PC-9 (cell line): ENCODE measurements at regions of chr3 and their contacts with region 1.

Region 1: GRCh38 chr3:106183762-106184391 is 315.1 kb upstream of the CBLB start:
- DNase-seq: peak; percentile 32 to 97
- H3K4me3 ChIP-seq: no peak overlapping the region
- H3K27ac ChIP-seq: peak overlapping the region; percentile 31
- H3K4me1 ChIP-seq: peaks cover 18% of the 10 kb centered on the region
- H3K27me3 ChIP-seq: no peaks in the 10 kb centered on the region
- CTCF ChIP-seq: no peak

Region 2: DNA sequence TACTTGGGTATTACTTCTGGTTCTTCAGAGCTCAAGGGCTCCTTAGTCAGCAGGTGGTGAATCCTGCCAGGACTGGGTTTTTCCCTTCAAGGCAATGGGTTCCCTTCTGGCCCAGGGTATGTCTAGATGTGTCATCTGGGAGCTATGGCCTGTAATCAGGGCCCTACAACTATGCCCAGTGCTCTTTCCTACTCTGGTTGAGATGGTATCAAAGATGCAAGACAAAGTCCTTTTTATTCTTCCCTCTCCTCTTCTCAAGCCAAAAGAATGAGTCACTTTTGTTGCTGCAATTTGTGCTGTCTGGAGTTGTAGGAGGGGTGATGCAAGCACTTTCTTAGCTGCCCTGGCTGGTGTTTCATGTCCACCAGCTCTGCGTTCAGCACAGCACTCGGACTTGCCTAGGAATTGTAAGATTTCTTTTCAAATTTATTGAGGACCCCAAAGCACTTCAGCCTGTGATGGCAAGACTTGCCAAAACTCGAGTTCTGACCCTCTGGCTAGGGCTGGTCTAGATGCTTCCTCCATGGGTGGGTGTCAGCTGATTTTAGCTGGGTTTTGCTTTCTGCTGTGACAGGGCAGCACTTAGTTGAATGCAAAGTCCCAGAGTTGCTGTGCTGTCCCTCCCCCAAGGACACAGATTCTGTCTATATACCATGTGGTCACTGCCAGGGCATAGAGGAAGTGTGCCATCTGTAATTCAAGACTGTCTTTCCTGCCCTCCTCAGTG is 185.9 kb before region 1 on chr3:
- CTCF ChIA-PET with region 1: no interaction called
- POLR2A ChIA-PET with region 1: no interaction called
- intact Hi-C with region 1: loop called (anchors 10 kb)
- DNase-seq: peak; percentile 61 to 95
- H3K4me3 ChIP-seq: peak overlapping the region; percentile 34; the same call in 1 of the 2 replicates
- H3K27ac ChIP-seq: peak overlapping the region; percentile 79
- H3K4me1 ChIP-seq: peaks cover 23% of the 10 kb centered on the region
- H3K27me3 ChIP-seq: no peaks in the 10 kb centered on the region
- CTCF ChIP-seq: no peak

Region 3: DNA sequence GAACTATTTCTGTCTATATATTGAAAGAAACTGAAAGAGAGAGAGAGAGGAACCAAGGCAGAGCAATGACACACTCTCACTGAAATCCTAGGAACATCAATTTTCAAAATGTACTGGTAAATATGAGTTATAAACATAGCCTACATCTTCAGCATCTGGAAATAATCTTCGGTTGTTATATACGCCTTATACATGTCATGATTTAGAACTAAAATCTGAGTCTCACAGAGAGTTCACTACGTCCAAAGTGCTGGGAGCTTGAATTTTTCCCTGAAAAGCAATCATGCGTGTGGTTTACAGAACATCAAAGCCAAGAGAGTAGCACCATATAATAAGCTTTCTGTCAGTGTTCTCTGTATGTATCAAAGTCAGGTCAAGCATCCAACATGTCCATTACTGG is 104.9 kb after region 1 on chr3:
- CTCF ChIA-PET with region 1: no interaction called
- POLR2A ChIA-PET with region 1: no interaction called
- intact Hi-C with region 1: no loop called
- DNase-seq: no peak
- H3K4me3 ChIP-seq: no peak overlapping the region
- H3K27ac ChIP-seq: no peak overlapping the region
- H3K4me1 ChIP-seq: no peaks in the 10 kb centered on the region
- H3K27me3 ChIP-seq: no peaks in the 10 kb centered on the region
- CTCF ChIP-seq: no peak

Region 4: DNA sequence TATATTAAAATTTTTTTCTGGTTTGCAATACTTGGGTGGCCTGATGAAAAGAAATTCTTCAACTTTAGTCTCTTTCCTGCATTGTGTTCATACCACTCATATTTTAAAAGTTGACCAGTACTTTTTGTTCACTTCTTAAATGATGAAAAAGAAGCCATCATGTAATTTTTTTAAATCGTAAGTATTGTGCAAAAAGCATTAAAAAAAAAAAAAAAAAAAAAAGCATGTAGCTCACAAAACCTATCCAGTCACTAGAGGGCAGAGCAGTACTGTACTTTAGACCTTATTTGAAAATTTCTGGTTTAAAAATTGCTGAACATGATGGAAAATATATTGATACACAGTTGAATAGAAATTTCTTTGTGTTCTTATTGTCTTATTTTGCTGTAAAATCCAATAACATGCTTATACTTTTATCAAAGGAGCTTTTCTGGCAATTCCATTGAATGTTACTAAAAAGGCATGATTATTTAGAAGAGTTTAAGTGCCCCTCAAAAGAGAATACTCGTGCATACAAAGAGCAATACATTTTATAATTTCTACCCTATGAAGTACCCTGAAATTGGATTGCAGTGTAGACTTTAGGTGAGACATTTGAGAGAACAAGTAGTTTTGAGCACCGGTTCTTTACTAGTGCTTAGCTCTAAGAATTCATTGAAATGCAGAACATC is 1476.6 kb after region 1 on chr3:
- CTCF ChIA-PET with region 1: no interaction called
- POLR2A ChIA-PET with region 1: interaction called, 10 read pairs
- intact Hi-C with region 1: no loop called
- DNase-seq: peak in 1 of 2 experiments; percentile 53
- H3K4me3 ChIP-seq: no peak overlapping the region
- H3K27ac ChIP-seq: no peak overlapping the region
- H3K4me1 ChIP-seq: no peaks in the 10 kb centered on the region
- H3K27me3 ChIP-seq: no peaks in the 10 kb centered on the region
- CTCF ChIP-seq: peak; percentile 92